ENCODE measurements at regions of chr16 and their contacts with region 1.

Region 1: DNA sequence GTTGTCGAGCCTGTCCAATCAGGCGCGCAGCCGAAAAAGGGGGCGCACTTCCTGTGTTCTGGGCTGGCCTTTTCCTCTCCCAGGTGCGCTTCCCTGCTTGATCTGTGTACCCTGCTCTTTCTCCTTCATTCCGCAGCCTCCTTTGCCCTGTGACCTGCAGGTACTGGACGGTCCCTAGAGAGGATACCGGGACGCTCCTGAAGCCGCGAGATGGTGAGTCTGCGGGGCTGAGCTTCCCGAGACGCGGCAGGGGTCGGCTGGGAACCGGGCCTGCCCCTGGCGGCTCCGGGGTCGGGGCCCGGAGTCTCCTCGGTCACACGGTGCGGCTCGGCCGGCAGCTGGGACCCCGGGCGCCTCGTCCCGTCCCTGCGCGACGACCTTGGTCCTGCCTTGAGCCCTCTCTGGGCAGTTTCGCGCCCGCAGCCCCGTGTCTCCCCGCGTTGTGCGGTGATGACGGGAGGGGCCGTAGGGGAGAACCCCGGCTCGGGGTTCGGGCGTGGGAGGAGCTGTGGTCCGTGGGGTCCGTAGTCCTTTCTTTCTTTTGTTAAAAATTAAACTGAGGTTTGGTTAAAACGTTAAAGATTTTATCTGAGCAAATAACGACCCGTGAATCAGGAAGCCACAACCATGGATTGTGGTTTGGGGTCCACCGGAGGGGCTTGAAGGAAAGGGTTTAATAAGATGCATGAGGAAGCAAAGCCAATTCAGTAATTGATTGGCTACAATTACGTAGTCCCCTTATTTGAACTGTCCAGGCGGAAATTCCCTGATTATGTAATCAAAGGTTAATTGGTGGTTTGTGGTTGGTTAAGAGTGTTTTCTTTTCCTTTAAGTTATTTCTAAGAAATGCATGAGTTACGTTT is 172.8 kb upstream of the ZNF267 start:
- DNase-seq: peak; percentile 92
- H3K4me3 Mint-ChIP-seq: peak overlapping the region; percentile 88
- H3K27ac Mint-ChIP-seq: peak overlapping the region; percentile 89
- H3K4me1 Mint-ChIP-seq: peaks cover 26% of the 10 kb centered on the region
- H3K27me3 Mint-ChIP-seq: peaks cover 15% of the 10 kb centered on the region

Region 2: GRCh38 chr16:31507929-31508705 is 192.6 kb before region 1 on chr16 and contains the start of gene RUSF1:
- intact Hi-C with region 1: loop called (anchors 5 kb)
- DNase-seq: peak; percentile 96
- H3K4me3 Mint-ChIP-seq: peak within 1 kb of the TSS; percentile 95
- H3K27ac Mint-ChIP-seq: peak within 1 kb of the TSS; percentile 94
- H3K4me1 Mint-ChIP-seq: peaks cover 38% of the 10 kb centered on the region
- H3K27me3 Mint-ChIP-seq: no peaks in the 10 kb centered on the region
- total RNA-seq, gene RUSF1: 40.9 and 41.1 TPM in 2 replicates

Region 3: GRCh38 chr16:31713071-31713944 is 12.6 kb after region 1 on chr16:
- intact Hi-C with region 1: loop called (anchors 1 kb)
- DNase-seq: peak; percentile 97
- H3K4me3 Mint-ChIP-seq: peak overlapping the region; percentile 99
- H3K27ac Mint-ChIP-seq: peak overlapping the region; percentile 99
- H3K4me1 Mint-ChIP-seq: peaks cover 30% of the 10 kb centered on the region
- H3K27me3 Mint-ChIP-seq: no peaks in the 10 kb centered on the region

Region 4: DNA sequence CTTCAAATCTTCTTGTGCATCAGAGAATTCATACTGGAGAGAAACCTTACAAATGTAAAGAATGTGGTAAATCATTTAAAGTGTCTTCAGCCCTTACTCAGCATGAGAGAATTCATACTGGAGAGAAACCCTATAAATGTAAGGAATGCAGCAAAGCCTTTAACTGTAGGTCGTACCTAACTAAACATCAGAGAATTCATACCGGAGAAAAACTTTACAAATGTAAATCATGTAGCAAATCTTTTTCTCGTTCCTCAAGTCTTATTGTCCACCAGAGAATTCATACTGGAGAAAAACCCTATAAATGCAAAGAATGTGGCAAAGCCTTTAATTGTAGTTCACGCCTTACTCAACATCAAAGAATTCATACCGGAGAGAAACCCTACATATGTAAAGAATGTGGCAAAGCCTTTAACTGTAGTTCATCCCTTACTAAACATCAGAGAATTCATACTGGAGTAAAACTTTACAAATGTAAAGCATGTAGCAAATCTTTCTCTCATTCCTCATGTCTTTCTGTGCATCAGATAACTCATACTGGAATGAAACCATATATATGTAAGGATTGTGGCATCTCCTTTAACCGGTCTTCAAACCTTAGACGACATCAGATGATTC is 54.4 kb after region 1 on chr16:
- intact Hi-C with region 1: no loop called
- DNase-seq: no peak
- H3K4me3 Mint-ChIP-seq: no peak overlapping the region
- H3K27ac Mint-ChIP-seq: no peak overlapping the region
- H3K4me1 Mint-ChIP-seq: no peaks in the 10 kb centered on the region
- H3K27me3 Mint-ChIP-seq: no peaks in the 10 kb centered on the region